ENCODE measurements at regions of chr14 and their contacts with region 1.

Region 1: DNA sequence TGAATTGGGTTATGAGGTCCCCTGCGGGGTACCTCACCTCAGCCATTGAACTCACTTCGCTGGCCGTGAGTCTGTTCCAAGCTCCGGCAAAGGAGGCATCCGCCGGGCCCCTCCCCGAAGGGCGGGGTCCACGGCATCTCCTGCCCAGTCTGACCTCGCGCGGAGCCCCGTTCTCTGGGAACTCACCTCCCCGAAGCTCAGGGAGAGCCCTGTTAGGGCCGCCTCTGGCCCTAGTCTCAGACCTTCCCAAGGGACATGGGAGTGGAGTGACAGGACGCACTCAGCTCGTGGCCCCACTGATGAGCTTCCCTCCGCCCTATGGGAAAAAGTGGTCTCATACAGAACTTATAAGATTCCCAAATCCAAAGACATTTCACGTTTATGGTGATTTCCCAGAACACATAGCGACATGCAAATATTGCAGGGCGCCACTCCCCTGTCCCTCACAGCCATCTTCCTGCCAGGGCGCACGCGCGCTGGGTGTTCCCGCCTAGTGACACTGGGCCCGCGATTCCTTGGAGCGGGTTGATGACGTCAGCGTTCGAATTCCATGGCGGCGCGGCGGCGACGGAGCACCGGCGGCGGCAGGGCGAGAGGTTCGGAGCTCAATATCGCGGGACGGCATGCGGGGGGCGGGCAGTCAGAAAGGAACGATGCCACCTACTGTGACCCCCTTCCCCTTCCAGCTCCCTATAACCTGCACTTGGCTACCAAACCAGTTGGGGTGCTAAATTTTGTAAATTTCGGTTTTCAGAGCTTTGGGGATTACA is at the start of gene PARP2:
- DNase-seq: peak; percentile 98
- H3K4me3 Mint-ChIP-seq: peak within 1 kb of the TSS; percentile 99
- H3K27ac Mint-ChIP-seq: peak within 1 kb of the TSS; percentile 97
- H3K4me1 Mint-ChIP-seq: peaks cover 18% of the 10 kb centered on the region
- H3K27me3 Mint-ChIP-seq: peaks cover 2% of the 10 kb centered on the region
- total RNA-seq, gene PARP2: 32.0 and 33.1 TPM in 2 replicates

Region 2: DNA sequence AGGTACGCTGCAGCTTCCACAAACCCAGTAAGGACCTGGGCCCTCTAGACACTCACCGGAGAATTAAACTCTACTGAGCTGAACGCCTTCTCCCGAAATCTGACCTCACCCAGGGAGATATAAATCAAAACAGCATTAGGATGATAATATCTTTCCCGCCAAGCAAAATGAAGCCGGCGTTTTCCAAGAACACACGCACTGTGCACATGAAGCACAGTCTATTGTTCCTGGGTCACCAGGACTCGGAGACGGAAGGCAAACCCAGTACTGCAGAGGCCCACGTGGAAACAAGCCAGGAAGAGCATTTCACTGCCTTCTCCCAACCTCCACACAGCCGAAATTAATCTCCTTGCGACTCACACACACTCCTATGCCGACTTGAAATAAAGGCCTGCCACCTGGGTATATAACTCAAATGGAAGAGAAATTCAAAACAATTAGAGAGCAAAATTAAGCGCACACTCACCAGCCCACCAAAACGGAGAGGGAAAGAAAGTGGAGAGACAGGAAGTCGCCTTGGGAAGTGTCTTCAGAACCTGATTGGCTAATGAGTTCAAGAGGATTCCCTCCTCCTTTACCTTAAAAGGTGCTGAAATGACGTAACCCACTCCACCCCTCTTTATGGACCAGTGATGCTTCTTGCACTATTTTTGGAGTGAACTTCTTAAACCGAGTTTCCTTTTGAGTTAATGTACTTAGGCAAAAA is 10.3 kb before region 1 on chr14 and contains the start of gene CCNB1IP1:
- intact Hi-C with region 1: loop called (anchors 1 kb)
- DNase-seq: peak; percentile 89
- H3K4me3 Mint-ChIP-seq: peak within 1 kb of the TSS; percentile 99
- H3K27ac Mint-ChIP-seq: peak within 1 kb of the TSS; percentile 94
- H3K4me1 Mint-ChIP-seq: peaks cover 38% of the 10 kb centered on the region
- H3K27me3 Mint-ChIP-seq: peaks cover 5% of the 10 kb centered on the region
- total RNA-seq, gene CCNB1IP1: 60.5 and 61.8 TPM in 2 replicates

Region 3: GRCh38 chr14:20400965-20401593 is 57.8 kb after region 1 on chr14:
- intact Hi-C with region 1: loop called (anchors 2 kb)
- DNase-seq: no peak
- H3K4me3 Mint-ChIP-seq: peak overlapping the region; percentile 68
- H3K27ac Mint-ChIP-seq: peak overlapping the region; percentile 96
- H3K4me1 Mint-ChIP-seq: peaks cover 25% of the 10 kb centered on the region
- H3K27me3 Mint-ChIP-seq: no peaks in the 10 kb centered on the region

Region 4: GRCh38 chr14:20454516-20455354 is 111.5 kb after region 1 on chr14 and contains the starts of genes APEX1 and OSGEP:
- intact Hi-C with region 1: loop called (anchors 1 kb)
- DNase-seq: peak; percentile 99
- H3K4me3 Mint-ChIP-seq: peak within 1 kb of the TSS; percentile 59
- H3K27ac Mint-ChIP-seq: no peak within 1 kb of the TSS
- H3K4me1 Mint-ChIP-seq: peaks cover 20% of the 10 kb centered on the region
- H3K27me3 Mint-ChIP-seq: no peaks in the 10 kb centered on the region
- total RNA-seq, gene APEX1: 239 and 242 TPM in 2 replicates
- total RNA-seq, gene OSGEP: 69.8 and 76.9 TPM in 2 replicates

Region 5: DNA sequence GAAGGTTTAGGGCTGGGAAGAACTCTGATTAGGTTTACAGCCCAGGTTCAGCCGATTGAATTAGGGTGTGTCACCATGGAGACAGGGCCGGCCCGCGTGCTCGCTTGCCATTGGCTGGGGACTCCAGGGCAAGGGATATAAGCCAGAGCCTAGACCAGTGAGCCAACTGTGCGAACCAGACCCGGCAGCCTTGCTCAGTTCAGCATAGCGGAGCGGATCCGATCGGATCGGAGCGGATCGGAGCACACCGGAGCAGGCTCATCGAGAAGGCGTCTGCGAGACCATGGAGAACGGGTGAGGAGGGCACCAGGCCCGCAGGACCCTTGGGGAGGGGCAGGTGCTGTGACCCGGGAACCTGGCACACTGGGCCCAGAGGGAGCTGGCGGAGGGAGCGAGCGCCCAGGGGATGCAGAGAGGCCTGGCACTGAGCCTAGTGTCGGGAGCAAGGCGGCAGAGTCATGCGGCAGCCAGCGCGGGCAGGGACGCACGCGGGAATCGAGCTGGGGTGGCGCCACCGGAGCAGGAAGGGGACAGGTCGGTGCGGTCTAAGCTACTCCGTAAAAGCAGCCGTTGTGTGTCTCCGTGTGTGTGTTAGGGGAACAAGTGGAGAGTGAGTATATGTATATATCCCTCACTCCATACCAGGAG is 126.1 kb after region 1 on chr14 and contains the start of gene PNP:
- intact Hi-C with region 1: loop called (anchors 2 kb)
- DNase-seq: peak; percentile 96
- H3K4me3 Mint-ChIP-seq: peak within 1 kb of the TSS; percentile 95
- H3K27ac Mint-ChIP-seq: peak within 1 kb of the TSS; percentile 100
- H3K4me1 Mint-ChIP-seq: peaks cover 36% of the 10 kb centered on the region
- H3K27me3 Mint-ChIP-seq: peaks cover 2% of the 10 kb centered on the region
- total RNA-seq, gene PNP: 155 and 158 TPM in 2 replicates

Region 6: GRCh38 chr14:21103710-21104447 is 760.6 kb after region 1 on chr14:
- intact Hi-C with region 1: loop called (anchors 5 kb)
- DNase-seq: peak; percentile 98
- H3K4me3 Mint-ChIP-seq: peak overlapping the region; percentile 93
- H3K27ac Mint-ChIP-seq: peak overlapping the region; percentile 94
- H3K4me1 Mint-ChIP-seq: peaks cover 35% of the 10 kb centered on the region
- H3K27me3 Mint-ChIP-seq: peaks cover 9% of the 10 kb centered on the region